Caco-2 (cell line): ENCODE measurements at regions of chrX and their contacts with region 1.

Region 1: GRCh38 chrX:53317365-53318069 is 36.1 kb upstream of the IQSEC2 start:
- DNase-seq: peak; percentile 50 to 71
- H3K4me3 ChIP-seq: no peak overlapping the region
- H3K4me3 Mint-ChIP-seq: no peak overlapping the region
- H3K27ac Mint-ChIP-seq: no peak overlapping the region
- H3K4me1 ChIP-seq: no peaks in the 10 kb centered on the region
- H3K4me1 Mint-ChIP-seq: peaks cover 17% of the 10 kb centered on the region
- H3K27me3 ChIP-seq: no peaks in the 10 kb centered on the region; the same call in 1 of the 2 replicates
- H3K27me3 Mint-ChIP-seq: peaks cover 18% of the 10 kb centered on the region
- CTCF ChIP-seq: peak; percentile 64 to 83

Region 2: GRCh38 chrX:53330331-53330730 is 12.8 kb after region 1 on chrX:
- CTCF ChIA-PET with region 1: interaction called, 5 read pairs
- POLR2A ChIA-PET with region 1: no interaction called
- intact Hi-C with region 1: loop called (anchors 1 kb)
- DNase-seq: no peak
- H3K4me3 ChIP-seq: no peak overlapping the region
- H3K4me3 Mint-ChIP-seq: no peak overlapping the region
- H3K27ac Mint-ChIP-seq: no peak overlapping the region
- H3K4me1 ChIP-seq: no peaks in the 10 kb centered on the region
- H3K4me1 Mint-ChIP-seq: no peaks in the 10 kb centered on the region
- H3K27me3 ChIP-seq: no peaks in the 10 kb centered on the region
- H3K27me3 Mint-ChIP-seq: peaks cover 20% of the 10 kb centered on the region
- CTCF ChIP-seq: no peak

Region 3: DNA sequence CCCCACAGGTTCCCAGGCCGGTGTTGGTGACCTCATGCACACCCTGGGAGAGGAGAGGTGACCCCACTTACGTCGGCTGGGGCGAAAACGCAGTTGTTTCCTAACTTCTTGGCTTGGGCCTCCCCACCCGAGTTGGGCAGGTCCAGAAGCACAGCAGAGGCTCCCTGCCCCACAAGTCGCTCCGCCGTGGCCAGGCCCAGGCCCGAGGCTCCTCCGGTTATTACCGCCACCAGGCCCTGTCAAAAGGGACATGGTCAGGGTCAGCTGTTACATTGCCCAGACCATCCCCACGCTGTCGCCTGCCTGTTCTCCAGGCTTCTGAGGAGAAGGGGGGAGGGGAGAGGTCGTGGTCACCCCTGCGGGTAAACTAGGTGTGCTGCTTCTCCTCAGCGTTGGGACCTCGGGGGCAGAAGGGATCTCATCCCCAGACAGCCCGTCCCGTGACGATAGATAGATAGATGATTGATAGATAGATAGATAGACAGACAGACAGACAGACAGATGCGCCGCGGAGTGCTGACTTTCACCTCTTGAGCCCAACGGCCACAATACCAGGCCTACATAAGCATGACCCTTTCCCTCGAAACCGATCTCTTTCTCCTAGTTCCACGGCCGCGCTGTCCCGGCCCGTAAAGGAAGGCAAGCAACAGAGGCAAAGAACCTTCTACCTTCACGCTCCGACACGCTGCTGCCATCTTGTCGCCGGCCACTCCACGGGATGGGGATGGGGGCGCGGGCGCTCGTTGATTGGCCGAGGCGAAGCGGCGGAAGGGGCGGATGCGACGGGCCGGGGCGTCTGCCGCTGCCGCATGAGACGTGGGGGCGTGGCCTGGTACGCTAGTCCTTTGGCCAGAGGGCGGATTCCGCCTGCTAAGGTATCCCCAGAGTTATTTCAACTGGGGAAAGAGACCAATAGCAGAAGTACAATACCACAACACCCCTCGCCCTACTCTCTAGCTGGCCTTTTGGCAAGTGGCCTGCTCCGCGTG is 116.4 kb after region 1 on chrX and contains the start of gene HSD17B10:
- CTCF ChIA-PET with region 1: interaction called, 5 read pairs
- POLR2A ChIA-PET with region 1: no interaction called
- intact Hi-C with region 1: loop called (anchors 1 kb)
- DNase-seq: peak; percentile 89
- H3K4me3 ChIP-seq: peak within 1 kb of the TSS; percentile 87
- H3K4me3 Mint-ChIP-seq: peak within 1 kb of the TSS; percentile 97
- H3K27ac Mint-ChIP-seq: peak within 1 kb of the TSS; percentile 79
- H3K4me1 ChIP-seq: peaks cover 7% of the 10 kb centered on the region; the same call in 1 of the 2 replicates
- H3K4me1 Mint-ChIP-seq: peaks cover 7% of the 10 kb centered on the region
- H3K27me3 ChIP-seq: no peaks in the 10 kb centered on the region
- H3K27me3 Mint-ChIP-seq: no peaks in the 10 kb centered on the region
- CTCF ChIP-seq: no peak
- total RNA-seq, gene HSD17B10: 129 and 137 TPM in 2 replicates

Region 4: GRCh38 chrX:53441531-53442321 is 124.2 kb after region 1 on chrX:
- CTCF ChIA-PET with region 1: interaction called, 10 read pairs
- POLR2A ChIA-PET with region 1: no interaction called
- intact Hi-C with region 1: no loop called
- DNase-seq: peak; percentile 83 to 84
- H3K4me3 ChIP-seq: peak overlapping the region; percentile 31
- H3K4me3 Mint-ChIP-seq: peak overlapping the region; percentile 75
- H3K27ac Mint-ChIP-seq: no peak overlapping the region
- H3K4me1 ChIP-seq: no peaks in the 10 kb centered on the region
- H3K4me1 Mint-ChIP-seq: no peaks in the 10 kb centered on the region
- H3K27me3 ChIP-seq: no peaks in the 10 kb centered on the region
- H3K27me3 Mint-ChIP-seq: no peaks in the 10 kb centered on the region
- CTCF ChIP-seq: no peak

Region 5: DNA sequence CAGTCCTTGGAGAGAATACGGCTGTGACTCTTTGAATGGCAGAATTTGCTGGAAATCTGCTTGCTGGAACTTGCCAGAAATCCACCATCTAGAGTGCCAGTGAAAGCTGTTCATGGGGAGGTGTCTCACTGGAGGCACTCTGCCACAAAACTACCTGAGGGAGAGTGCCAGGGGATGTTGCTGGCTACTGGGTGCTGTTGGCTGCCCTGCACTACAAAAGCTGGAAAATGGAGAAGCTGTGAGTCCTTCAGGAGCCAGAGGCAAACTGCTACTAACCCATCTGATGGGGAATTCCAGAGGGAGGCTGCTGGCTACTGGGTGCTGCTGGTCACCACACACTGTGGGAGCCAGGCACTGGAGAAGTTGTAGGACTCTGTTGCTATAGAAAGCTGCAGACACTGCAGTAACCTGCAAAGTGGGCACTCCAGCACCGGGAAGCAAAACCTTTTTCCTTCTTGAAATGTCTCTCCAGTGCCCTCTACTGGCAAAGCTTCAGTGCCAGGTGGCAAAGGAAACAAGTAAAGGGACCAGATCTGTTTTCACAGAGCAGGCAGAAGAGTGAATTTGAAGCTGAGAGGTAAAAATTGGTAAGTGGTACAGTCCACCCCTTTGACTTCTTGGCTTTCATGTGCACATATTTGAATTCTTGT is 164.4 kb after region 1 on chrX:
- CTCF ChIA-PET with region 1: interaction called, 7 read pairs
- POLR2A ChIA-PET with region 1: no interaction called
- intact Hi-C with region 1: loop called (anchors 5 kb)
- DNase-seq: peak; percentile 36 to 43
- H3K4me3 ChIP-seq: no peak overlapping the region
- H3K4me3 Mint-ChIP-seq: no peak overlapping the region
- H3K27ac Mint-ChIP-seq: no peak overlapping the region
- H3K4me1 ChIP-seq: no peaks in the 10 kb centered on the region
- H3K4me1 Mint-ChIP-seq: no peaks in the 10 kb centered on the region
- H3K27me3 ChIP-seq: no peaks in the 10 kb centered on the region
- H3K27me3 Mint-ChIP-seq: no peaks in the 10 kb centered on the region
- CTCF ChIP-seq: peak in 1 of 2 experiments; percentile 63